Calu3 (cell line): ENCODE measurements at regions of chr22 and their contacts with region 1.

Region 1: DNA sequence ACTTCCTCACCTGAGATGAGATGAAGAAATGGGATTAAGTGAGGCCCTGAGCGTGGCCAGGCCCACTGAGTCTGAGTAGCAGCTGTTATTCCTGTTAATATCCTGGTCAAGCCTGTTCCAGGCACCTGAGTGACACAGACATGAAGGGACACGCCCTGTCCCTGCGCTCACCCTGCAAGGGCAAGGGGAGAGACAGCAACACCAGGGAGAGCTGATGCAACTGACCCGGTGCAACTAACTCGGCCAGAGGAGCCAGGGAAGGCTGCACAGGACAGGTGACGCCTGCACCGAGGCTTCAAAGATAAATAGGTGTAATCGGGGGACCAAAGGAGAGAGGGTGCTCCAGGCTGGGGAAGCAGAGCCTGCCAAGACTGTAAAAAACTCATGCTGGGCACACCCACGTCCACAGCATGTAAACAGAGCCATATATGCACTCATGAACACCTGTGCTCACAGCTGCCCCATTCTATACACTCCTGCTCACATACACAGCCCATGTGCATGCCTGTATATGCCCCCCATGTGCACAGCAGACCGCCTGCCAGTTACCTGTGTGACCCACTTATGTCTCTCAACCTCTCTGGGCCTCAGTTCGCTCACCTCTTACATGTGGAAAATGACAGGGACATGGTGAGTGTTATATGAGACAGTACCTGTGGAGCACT is 22.8 kb upstream of the GCAT start:
- DNase-seq: peak; percentile 79
- H3K4me3 Mint-ChIP-seq: peak overlapping the region; percentile 33
- H3K27ac Mint-ChIP-seq: peak overlapping the region; percentile 72
- H3K4me1 Mint-ChIP-seq: peaks cover 13% of the 10 kb centered on the region
- H3K27me3 Mint-ChIP-seq: no peaks in the 10 kb centered on the region
- CTCF ChIP-seq: no peak

Region 2: GRCh38 chr22:37416827-37417226 is 368.1 kb before region 1 on chr22:
- CTCF ChIA-PET with region 1: interaction called, 12 read pairs
- intact Hi-C with region 1: no loop called
- DNase-seq: no peak
- H3K4me3 Mint-ChIP-seq: no peak overlapping the region
- H3K27ac Mint-ChIP-seq: no peak overlapping the region
- H3K4me1 Mint-ChIP-seq: peaks cover 25% of the 10 kb centered on the region
- H3K27me3 Mint-ChIP-seq: peaks cover 56% of the 10 kb centered on the region
- CTCF ChIP-seq: no peak

Region 3: GRCh38 chr22:37774728-37775127 is 10.2 kb before region 1 on chr22:
- CTCF ChIA-PET with region 1: no interaction called
- intact Hi-C with region 1: no loop called
- DNase-seq: no peak
- H3K4me3 Mint-ChIP-seq: no peak overlapping the region
- H3K27ac Mint-ChIP-seq: peak overlapping the region; percentile 6
- H3K4me1 Mint-ChIP-seq: peaks cover 15% of the 10 kb centered on the region
- H3K27me3 Mint-ChIP-seq: no peaks in the 10 kb centered on the region
- CTCF ChIP-seq: no peak